CD4-positive, alpha-beta memory T cell (primary cell): ENCODE measurements at regions of chr9 and their contacts with region 1.

Region 1: GRCh38 chr9:129487642-129488409 is 133.1 kb downstream of the C9orf50 start:
- DNase-seq: peak in 2 of 5 donors; percentile 50 to 73
- H3K4me3 ChIP-seq: peak overlapping the region; percentile 38 to 52
- H3K4me3 Mint-ChIP-seq: peak overlapping the region; percentile 87 to 93 (median 90)
- H3K27ac ChIP-seq: peak overlapping the region; percentile 91
- H3K27ac Mint-ChIP-seq: peak overlapping the region; percentile 93 to 100 (median 98)
- H3K4me1 ChIP-seq: peaks cover 65% of the 10 kb centered on the region
- H3K4me1 Mint-ChIP-seq: peaks cover 33 to 80% (median 54%) of the 10 kb centered on the region in 4 donors
- H3K27me3 ChIP-seq: no peaks in the 10 kb centered on the region
- H3K27me3 Mint-ChIP-seq: peaks cover 0 to 3% of the 10 kb centered on the region in 2 donors

Region 2: DNA sequence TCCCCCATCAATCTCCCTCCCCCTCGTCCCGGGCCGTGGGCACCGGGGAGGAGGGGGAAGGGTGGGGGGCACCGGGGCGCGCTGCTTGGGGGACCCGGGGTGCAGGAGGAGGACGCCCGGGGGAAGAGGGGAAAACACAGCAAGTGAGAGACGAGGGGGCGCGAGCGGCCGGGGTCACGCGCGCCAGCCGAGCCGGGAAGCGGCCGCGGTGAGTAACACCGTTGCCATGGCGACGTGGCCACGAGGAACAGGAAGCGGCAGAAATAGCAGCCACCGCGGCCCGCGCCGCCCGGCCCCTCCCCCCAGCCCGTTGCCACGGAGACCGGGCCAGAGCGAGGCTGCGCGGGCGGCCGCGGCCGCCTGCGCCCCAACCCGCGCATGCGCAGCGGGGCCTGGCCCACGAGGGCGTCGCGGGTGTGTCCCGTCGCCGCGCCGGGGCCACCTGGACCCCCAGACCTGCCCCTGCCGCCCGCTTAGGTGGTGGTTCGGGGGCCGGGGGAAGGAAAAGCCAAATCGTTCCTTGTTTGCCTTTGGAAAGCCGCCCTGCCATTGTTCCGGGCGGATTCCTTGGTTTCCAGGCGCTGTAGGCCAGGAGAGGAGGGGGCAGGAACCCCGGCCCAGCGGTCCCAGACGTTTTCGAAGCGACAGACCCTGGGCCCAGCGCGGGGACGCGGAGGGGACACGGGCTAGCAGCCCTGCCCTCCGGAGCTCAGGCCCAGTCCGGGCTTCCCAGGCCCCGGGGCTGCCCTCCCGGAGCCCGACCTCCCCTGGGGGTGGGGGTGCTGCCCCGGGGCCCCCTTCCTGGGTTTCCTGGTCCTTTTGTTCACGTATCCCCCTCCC is 74.1 kb before region 1 on chr9:
- CTCF ChIA-PET with region 1: no interaction called
- POLR2A ChIA-PET with region 1: interaction called, 14 read pairs
- intact Hi-C with region 1: loop called (anchors 1 kb)
- DNase-seq: peak; percentile 96 to 99 (median 98)
- H3K4me3 ChIP-seq: peak overlapping the region; percentile 29 to 53
- H3K4me3 Mint-ChIP-seq: peak overlapping the region; percentile 82 to 91 (median 86)
- H3K27ac ChIP-seq: peak overlapping the region; percentile 97
- H3K27ac Mint-ChIP-seq: peak overlapping the region; percentile 96 to 99 (median 98)
- H3K4me1 ChIP-seq: peaks cover 27% of the 10 kb centered on the region
- H3K4me1 Mint-ChIP-seq: peaks cover 16 to 34% (median 24%) of the 10 kb centered on the region in 4 donors
- H3K27me3 ChIP-seq: no peaks in the 10 kb centered on the region
- H3K27me3 Mint-ChIP-seq: no peaks in the 10 kb centered on the region

Region 3: GRCh38 chr9:129436751-129437625 is 50.8 kb before region 1 on chr9:
- CTCF ChIA-PET with region 1: interaction called, 3 read pairs
- POLR2A ChIA-PET with region 1: interaction called, 18 read pairs
- intact Hi-C with region 1: no loop called
- DNase-seq: peak in 4 of 5 donors; percentile 45 to 49 (median 48)
- H3K4me3 ChIP-seq: peak overlapping the region in 1 of 2 donors; percentile 45
- H3K4me3 Mint-ChIP-seq: peak overlapping the region; percentile 85 to 96 (median 89)
- H3K27ac ChIP-seq: no peak overlapping the region
- H3K27ac Mint-ChIP-seq: peak overlapping the region in 6 of 7 donors; percentile 5 to 87 (median 82)
- H3K4me1 ChIP-seq: peaks cover 20% of the 10 kb centered on the region
- H3K4me1 Mint-ChIP-seq: peaks cover 12 to 43% (median 22%) of the 10 kb centered on the region in 4 donors
- H3K27me3 ChIP-seq: peaks cover 19% of the 10 kb centered on the region
- H3K27me3 Mint-ChIP-seq: peaks cover 32 to 36% of the 10 kb centered on the region in 2 donors